HEK293 (cell line): ENCODE measurements at regions of chr3 and their contacts with region 1.

Region 1: GRCh38 chr3:172138795-172139441 is 99.5 kb downstream of the FNDC3B start:
- H3K4me3 ChIP-seq: no peak overlapping the region
- H3K27ac ChIP-seq: no peak overlapping the region
- H3K4me1 ChIP-seq: peaks cover 15% of the 10 kb centered on the region
- CTCF ChIP-seq: no peak

Region 2: DNA sequence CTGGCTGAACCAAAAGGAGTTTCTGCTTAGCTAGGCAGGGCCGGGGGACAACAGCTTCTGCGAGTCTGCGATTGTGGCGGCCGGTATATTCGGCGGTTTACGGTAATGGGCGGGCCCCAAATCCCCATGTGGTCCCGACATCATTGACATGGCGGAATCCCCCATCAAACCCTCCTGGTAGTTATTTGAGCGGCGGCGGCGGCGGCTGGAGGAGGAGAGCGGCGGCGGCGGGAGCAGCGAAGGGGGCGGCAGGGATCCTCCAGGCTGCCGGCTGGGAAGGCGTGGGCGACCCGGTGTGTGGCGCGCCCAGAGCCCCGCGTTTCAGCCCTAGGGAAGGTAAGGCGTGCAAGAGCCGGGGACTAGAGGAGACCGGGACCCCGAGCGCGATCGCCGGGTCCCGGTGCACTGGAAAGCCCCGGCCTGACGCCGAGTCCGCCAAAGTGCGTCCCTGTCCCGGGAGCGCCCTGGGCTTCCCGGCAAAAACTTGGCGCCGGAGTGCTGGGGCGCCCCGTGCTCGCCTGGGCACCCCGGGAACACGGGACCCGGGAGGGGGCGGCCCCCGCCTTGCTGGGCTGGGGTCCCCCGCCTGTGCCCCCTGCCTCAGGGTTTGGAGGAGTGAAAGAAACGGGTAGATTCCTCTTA is 99.4 kb before region 1 on chr3 and contains the start of gene FNDC3B:
- CTCF ChIA-PET with region 1: interaction called, 3 read pairs
- POLR2A ChIA-PET with region 1: interaction called, 10 read pairs
- H3K4me3 ChIP-seq: peak within 1 kb of the TSS; percentile 92
- H3K27ac ChIP-seq: peak within 1 kb of the TSS; percentile 98
- H3K4me1 ChIP-seq: peaks cover 4% of the 10 kb centered on the region; the same call in 1 of the 2 replicates
- CTCF ChIP-seq: no peak